ENCODE measurements at regions of chr15 and their contacts with region 1.

Region 1: DNA sequence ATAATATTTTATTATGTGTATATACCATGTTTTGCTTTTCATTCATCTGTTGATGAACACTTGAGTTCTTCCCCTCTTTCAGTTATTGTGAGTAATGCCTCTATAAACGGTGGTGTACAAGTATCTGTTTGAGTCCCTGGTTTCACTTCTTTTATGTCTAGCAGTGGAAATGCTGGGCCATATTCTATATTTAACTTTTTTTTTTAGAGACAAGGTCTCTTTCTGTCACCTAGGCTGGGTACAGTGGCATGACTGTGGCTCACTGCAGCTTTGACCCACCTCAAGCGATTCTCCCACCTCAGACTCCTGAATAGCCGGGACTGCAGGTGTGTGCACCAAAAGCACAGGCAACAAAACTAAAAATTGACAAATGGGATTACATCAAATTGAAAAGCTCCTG is 19.9 kb downstream of the GOLM2 start:
- DNase-seq: no peak
- H3K4me3 Mint-ChIP-seq: peak overlapping the region; percentile 65
- H3K27ac Mint-ChIP-seq: peak overlapping the region; percentile 97
- H3K4me1 Mint-ChIP-seq: peaks cover 46% of the 10 kb centered on the region
- H3K27me3 Mint-ChIP-seq: no peaks in the 10 kb centered on the region

Region 2: GRCh38 chr15:44286814-44287452 is 21.5 kb before region 1 on chr15:
- intact Hi-C with region 1: loop called (anchors 1 kb)
- DNase-seq: no peak
- H3K4me3 Mint-ChIP-seq: peak overlapping the region; percentile 95
- H3K27ac Mint-ChIP-seq: peak overlapping the region; percentile 99
- H3K4me1 Mint-ChIP-seq: peaks cover 30% of the 10 kb centered on the region
- H3K27me3 Mint-ChIP-seq: peaks cover 8% of the 10 kb centered on the region

Region 3: GRCh38 chr15:44426975-44427755 is 118.8 kb after region 1 on chr15 and contains the start of gene CTDSPL2:
- intact Hi-C with region 1: loop called (anchors 1 kb)
- DNase-seq: peak; percentile 95
- H3K4me3 Mint-ChIP-seq: peak within 1 kb of the TSS; percentile 94
- H3K27ac Mint-ChIP-seq: peak within 1 kb of the TSS; percentile 99
- H3K4me1 Mint-ChIP-seq: peaks cover 35% of the 10 kb centered on the region
- H3K27me3 Mint-ChIP-seq: no peaks in the 10 kb centered on the region
- total RNA-seq, gene CTDSPL2: 66.1 and 69.6 TPM in 2 replicates

Region 4: DNA sequence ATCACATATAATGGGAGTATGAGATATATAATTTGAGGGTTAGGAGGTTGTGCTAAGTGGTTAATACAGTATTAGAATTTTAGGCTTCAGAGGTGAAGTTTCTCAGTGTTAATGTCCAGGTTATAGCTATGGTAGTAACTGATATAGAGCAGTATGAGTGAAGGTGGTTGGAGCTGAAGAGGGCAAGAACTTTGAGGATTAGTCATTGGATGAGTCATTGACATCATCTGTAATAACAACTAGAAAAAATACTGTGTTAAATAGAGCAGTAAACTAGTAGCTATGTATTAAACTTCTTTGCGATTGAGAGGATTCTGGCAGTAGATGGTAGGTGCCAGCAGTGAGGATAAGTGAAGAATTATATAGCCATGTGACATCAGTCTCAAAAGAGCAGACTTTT is 181.0 kb after region 1 on chr15:
- intact Hi-C with region 1: loop called (anchors 5 kb)
- DNase-seq: no peak
- H3K4me3 Mint-ChIP-seq: no peak overlapping the region
- H3K27ac Mint-ChIP-seq: peak overlapping the region; percentile 64
- H3K4me1 Mint-ChIP-seq: peaks cover 27% of the 10 kb centered on the region
- H3K27me3 Mint-ChIP-seq: no peaks in the 10 kb centered on the region

Region 5: DNA sequence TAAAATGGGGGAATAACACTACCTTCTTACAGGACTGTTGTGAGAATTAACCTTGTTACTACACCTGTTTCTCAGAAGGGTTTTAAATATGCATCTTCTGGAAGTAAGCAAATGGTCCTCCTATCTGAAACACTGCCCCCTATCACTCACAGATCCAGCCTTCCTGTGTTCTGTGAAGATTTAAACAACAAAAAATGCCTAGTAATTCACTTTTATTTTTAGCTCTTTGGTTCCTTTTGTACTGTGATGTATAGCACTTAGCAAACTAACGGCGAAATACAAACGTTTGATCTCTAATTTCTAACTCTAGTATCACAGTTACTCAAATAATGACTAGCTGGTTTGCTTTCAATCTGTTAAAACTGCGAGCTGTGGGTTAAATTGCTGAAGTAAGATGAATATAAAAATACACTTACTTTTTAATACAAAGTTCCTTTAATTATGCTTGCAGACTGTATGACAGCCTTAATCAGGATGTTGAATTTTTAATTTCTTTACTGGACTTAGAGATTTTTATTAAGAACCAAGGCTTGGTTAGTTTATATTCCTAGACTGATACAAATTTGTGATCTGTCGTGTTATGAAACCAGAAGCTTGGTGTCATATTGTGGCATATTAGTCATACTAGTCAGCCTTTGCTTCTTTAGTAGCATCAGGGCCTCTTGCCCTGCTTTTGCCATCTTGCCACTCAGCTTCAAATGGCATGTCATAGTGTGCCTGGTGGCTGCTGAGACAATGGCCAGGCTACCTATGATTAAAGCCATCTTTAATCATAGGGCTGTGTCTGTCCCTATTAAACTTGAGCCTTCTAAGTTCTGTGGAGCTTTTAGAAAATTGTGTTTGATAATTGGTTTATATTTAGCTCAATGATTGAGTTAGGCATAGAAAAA is 237.7 kb after region 1 on chr15:
- intact Hi-C with region 1: loop called (anchors 5 kb)
- DNase-seq: peak; percentile 39
- H3K4me3 Mint-ChIP-seq: peak overlapping the region; percentile 53
- H3K27ac Mint-ChIP-seq: peak overlapping the region; percentile 87
- H3K4me1 Mint-ChIP-seq: peaks cover 47% of the 10 kb centered on the region
- H3K27me3 Mint-ChIP-seq: no peaks in the 10 kb centered on the region